Caco-2 (cell line): ENCODE measurements at regions of chr22 and their contacts with region 1.

Region 1: GRCh38 chr22:29524440-29525191 is 28.9 kb downstream of the THOC5 start:
- DNase-seq: peak; percentile 57 to 68
- H3K4me3 ChIP-seq: no peak overlapping the region
- H3K4me3 Mint-ChIP-seq: no peak overlapping the region
- H3K27ac Mint-ChIP-seq: peak overlapping the region; percentile 66
- H3K4me1 ChIP-seq: no peaks in the 10 kb centered on the region; the same call in 1 of the 2 replicates
- H3K4me1 Mint-ChIP-seq: no peaks in the 10 kb centered on the region
- H3K27me3 ChIP-seq: no peaks in the 10 kb centered on the region
- H3K27me3 Mint-ChIP-seq: no peaks in the 10 kb centered on the region
- CTCF ChIP-seq: peak; percentile 62 to 69

Region 2: DNA sequence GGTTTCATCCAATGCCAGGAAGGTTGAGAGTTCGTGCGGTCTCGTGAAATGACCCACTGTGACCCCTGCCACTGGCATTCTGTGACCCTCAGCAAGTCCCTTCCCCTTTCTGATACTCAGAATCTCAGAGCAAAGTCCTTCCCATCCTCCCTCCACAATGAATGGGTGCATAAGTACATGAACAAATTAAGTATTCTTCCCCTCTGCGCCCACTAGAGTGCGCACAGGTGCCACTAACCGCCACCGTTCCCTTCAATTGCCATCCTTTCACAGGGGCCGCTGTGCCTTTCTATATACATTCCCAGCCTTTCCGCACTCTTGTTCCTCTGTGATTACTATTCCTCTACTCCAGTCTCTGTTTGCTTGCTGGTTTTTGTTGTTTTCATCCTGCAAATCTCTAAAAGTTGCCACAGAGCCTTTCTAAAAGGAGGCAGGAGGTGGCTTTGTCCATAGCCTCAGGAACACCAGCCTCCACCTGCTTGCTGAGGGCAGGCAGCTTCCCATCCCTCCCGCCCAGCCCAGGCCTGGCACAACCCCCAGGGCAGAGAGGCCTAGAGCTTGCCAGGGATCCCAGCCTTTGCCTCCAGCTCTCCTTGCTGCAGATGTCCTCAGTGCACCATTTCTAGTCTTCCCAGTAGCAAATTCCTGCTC is 129.6 kb before region 1 on chr22:
- CTCF ChIA-PET with region 1: interaction called, 9 read pairs
- POLR2A ChIA-PET with region 1: no interaction called
- intact Hi-C with region 1: loop called (anchors 1 kb)
- DNase-seq: peak; percentile 66 to 77
- H3K4me3 ChIP-seq: no peak overlapping the region
- H3K4me3 Mint-ChIP-seq: no peak overlapping the region
- H3K27ac Mint-ChIP-seq: no peak overlapping the region
- H3K4me1 ChIP-seq: peaks cover 11% of the 10 kb centered on the region
- H3K4me1 Mint-ChIP-seq: peaks cover 5% of the 10 kb centered on the region
- H3K27me3 ChIP-seq: no peaks in the 10 kb centered on the region
- H3K27me3 Mint-ChIP-seq: peaks cover 3% of the 10 kb centered on the region
- CTCF ChIP-seq: peak; percentile 80 to 83

Region 3: GRCh38 chr22:29470159-29470855 is 54.3 kb before region 1 on chr22:
- CTCF ChIA-PET with region 1: interaction called, 9 read pairs
- POLR2A ChIA-PET with region 1: no interaction called
- intact Hi-C with region 1: loop called (anchors 1 kb)
- DNase-seq: peak; percentile 65 to 87
- H3K4me3 ChIP-seq: peak overlapping the region; percentile 43
- H3K4me3 Mint-ChIP-seq: peak overlapping the region; percentile 77
- H3K27ac Mint-ChIP-seq: no peak overlapping the region
- H3K4me1 ChIP-seq: peaks cover 3% of the 10 kb centered on the region; the same call in 1 of the 2 replicates
- H3K4me1 Mint-ChIP-seq: peaks cover 6% of the 10 kb centered on the region
- H3K27me3 ChIP-seq: no peaks in the 10 kb centered on the region
- H3K27me3 Mint-ChIP-seq: peaks cover 4% of the 10 kb centered on the region
- CTCF ChIP-seq: peak; percentile 94

Region 4: GRCh38 chr22:29499852-29500251 is 24.8 kb before region 1 on chr22:
- CTCF ChIA-PET with region 1: no interaction called
- POLR2A ChIA-PET with region 1: no interaction called
- intact Hi-C with region 1: no loop called
- DNase-seq: no peak
- H3K4me3 ChIP-seq: no peak overlapping the region
- H3K4me3 Mint-ChIP-seq: no peak overlapping the region
- H3K27ac Mint-ChIP-seq: no peak overlapping the region
- H3K4me1 ChIP-seq: peaks cover 10% of the 10 kb centered on the region
- H3K4me1 Mint-ChIP-seq: peaks cover 9% of the 10 kb centered on the region
- H3K27me3 ChIP-seq: no peaks in the 10 kb centered on the region
- H3K27me3 Mint-ChIP-seq: no peaks in the 10 kb centered on the region
- CTCF ChIP-seq: no peak

Region 5: GRCh38 chr22:29569011-29569678 is 44.5 kb after region 1 on chr22:
- CTCF ChIA-PET with region 1: no interaction called
- POLR2A ChIA-PET with region 1: no interaction called
- intact Hi-C with region 1: no loop called
- DNase-seq: peak; percentile 53 to 72
- H3K4me3 ChIP-seq: no peak overlapping the region
- H3K4me3 Mint-ChIP-seq: peak overlapping the region; percentile 54
- H3K27ac Mint-ChIP-seq: peak overlapping the region; percentile 75
- H3K4me1 ChIP-seq: peaks cover 29% of the 10 kb centered on the region
- H3K4me1 Mint-ChIP-seq: peaks cover 13% of the 10 kb centered on the region
- H3K27me3 ChIP-seq: no peaks in the 10 kb centered on the region
- H3K27me3 Mint-ChIP-seq: no peaks in the 10 kb centered on the region
- CTCF ChIP-seq: no peak

Region 6: DNA sequence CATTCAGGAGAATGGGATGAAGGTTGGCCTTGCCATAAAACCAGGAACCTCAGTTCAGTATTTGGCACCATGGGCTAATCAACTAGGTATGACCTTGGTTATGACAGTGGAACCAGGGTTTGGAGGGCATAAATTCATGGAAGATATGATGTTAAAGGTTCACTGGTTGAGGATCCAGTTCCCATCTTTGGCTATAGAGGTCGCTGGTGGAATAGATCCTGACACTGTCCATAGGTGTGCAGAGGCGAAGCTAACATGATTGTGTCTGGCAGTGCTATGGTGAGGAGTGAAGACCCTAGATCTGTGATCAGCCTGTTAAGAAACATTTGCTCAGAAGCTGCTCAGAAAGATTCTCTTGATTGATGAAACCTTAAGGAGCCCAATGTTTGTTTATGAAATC is 84.5 kb after region 1 on chr22:
- CTCF ChIA-PET with region 1: no interaction called
- POLR2A ChIA-PET with region 1: no interaction called
- intact Hi-C with region 1: no loop called
- DNase-seq: no peak
- H3K4me3 ChIP-seq: no peak overlapping the region
- H3K4me3 Mint-ChIP-seq: no peak overlapping the region
- H3K27ac Mint-ChIP-seq: no peak overlapping the region
- H3K4me1 ChIP-seq: no peaks in the 10 kb centered on the region
- H3K4me1 Mint-ChIP-seq: no peaks in the 10 kb centered on the region
- H3K27me3 ChIP-seq: no peaks in the 10 kb centered on the region
- H3K27me3 Mint-ChIP-seq: no peaks in the 10 kb centered on the region
- CTCF ChIP-seq: no peak